Activated T-helper 1 cell treated with anti-CD3 and anti-CD28 coated beads, Interleukin-12 subunit alpha, Interleukin-12 subunit beta, Interleukin-2, Interleukin-4 antibody, amounts not matched to agents 30 ng/mL and 10 ng/mL and 1 ng/mL, durations not matched to agents 14 hours and 24 hours and 36 hours (primary cell): ENCODE measurements at regions of chr1 and their contacts with region 1.

Region 1: GRCh38 chr1:66350001-66350547 is 183.9 kb upstream of the SGIP1 start:
- DNase-seq: no peak
- H3K4me3 Mint-ChIP-seq: peak overlapping the region; percentile 75
- H3K27ac Mint-ChIP-seq: peak overlapping the region; percentile 81
- H3K4me1 Mint-ChIP-seq: peaks cover 90% of the 10 kb centered on the region
- H3K27me3 Mint-ChIP-seq: no peaks in the 10 kb centered on the region

Region 2: DNA sequence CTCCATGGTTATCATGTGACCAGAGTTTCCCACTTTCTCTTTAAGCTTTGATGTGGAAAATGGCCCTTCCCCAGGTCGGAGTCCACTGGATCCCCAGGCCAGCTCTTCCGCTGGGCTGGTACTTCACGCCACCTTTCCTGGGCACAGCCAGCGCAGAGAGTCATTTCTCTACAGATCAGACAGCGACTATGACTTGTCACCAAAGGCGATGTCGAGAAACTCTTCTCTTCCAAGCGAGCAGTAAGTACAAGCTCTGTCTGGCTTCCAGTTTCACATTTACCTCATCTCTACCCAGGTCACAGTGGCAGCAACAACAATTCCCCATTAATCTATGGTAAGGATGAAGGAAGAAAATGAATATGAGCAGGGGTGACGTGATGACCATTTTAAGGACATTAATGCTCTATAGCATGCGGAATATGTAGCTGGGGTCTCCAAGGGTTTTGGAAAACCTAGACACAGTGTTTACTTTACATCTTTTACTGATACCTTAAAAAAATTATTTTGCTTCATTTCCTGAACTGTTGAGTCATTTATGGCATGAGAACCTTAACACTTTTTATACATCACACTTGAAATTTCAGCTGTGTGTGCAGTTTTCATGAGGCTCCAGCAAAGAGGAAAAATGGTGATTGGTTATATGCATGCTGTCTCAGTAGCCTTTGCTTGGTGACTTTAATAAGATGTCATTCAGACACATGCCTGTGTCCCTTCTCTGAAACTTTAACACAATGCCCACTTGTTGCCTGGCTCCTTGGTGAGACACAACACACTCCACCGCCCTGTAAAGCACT is 102.5 kb before region 1 on chr1:
- intact Hi-C with region 1: no loop called
- DNase-seq: peak; percentile 43
- H3K4me3 Mint-ChIP-seq: peak overlapping the region; percentile 72
- H3K27ac Mint-ChIP-seq: peak overlapping the region; percentile 71
- H3K4me1 Mint-ChIP-seq: peaks cover 58% of the 10 kb centered on the region
- H3K27me3 Mint-ChIP-seq: no peaks in the 10 kb centered on the region

Region 3: DNA sequence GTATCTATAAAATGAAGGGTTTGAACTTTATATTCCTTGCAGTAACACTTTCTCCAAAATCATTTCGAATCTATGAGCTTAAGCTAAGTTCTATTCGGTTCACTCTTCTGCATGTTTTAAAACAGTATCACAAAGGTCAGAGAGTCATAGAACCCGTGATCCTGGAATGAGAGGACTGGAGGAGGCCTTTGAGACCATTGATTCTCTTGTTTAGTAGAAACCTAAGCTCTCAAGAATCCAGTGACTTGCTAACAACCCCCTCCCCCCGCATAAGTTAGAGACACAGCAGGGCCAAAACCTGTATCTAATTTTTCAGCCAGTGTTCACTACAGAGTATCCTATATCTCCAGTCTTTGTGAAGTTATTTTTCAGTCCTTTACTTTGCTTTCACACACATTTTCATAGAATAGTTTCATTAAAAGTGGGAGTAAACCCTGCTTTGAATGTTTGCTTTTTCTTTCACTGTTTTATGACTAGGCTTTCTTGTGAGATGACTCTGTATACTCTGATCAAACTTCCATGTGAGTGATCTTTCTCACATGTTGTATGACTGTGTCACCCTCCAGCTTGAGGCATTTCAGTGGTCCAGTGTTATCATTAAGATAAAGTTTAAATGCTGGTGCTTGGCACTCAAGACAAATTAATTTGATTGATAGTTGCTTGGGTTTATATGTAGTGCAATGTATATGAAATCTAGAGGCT is 91.5 kb before region 1 on chr1:
- intact Hi-C with region 1: loop called (anchors 1 kb)
- DNase-seq: no peak
- H3K4me3 Mint-ChIP-seq: no peak overlapping the region
- H3K27ac Mint-ChIP-seq: peak overlapping the region; percentile 53
- H3K4me1 Mint-ChIP-seq: peaks cover 83% of the 10 kb centered on the region
- H3K27me3 Mint-ChIP-seq: peaks cover 2% of the 10 kb centered on the region

Region 4: GRCh38 chr1:66300972-66301451 is 49.1 kb before region 1 on chr1:
- intact Hi-C with region 1: loop called (anchors 1 kb)
- DNase-seq: peak; percentile 48
- H3K4me3 Mint-ChIP-seq: peak overlapping the region; percentile 80
- H3K27ac Mint-ChIP-seq: peak overlapping the region; percentile 94
- H3K4me1 Mint-ChIP-seq: peaks cover 47% of the 10 kb centered on the region
- H3K27me3 Mint-ChIP-seq: no peaks in the 10 kb centered on the region

Region 5: DNA sequence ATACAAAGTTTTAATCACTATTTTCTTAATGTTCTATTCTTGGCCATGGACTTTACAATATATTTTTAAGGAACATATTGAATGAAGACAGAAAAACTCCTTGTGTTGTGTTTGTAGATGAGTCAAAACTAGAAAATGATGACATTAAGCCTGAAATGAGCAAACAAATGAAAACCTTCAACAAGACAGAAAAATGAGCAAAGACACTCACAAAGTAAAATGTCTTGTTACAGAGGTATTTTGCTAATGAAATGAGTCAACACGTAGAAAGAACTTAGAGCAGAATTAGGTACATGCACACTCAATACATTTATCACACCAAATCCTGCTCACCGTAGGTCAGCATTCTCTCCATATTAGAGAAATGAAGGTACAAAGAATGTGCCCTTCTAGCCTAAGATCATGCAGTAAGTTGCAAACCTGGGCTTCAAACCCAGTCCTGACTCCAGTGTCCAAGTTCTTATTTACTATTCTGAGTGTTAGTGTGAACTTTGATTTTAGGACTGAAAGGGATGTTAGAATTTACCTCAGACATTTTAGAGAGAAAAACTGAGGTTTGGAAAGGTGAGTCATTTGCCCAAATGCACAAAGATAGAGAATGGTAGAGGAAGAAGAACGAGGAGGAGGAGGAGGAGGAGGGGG is 49.9 kb after region 1 on chr1:
- intact Hi-C with region 1: loop called (anchors 1 kb)
- DNase-seq: no peak
- H3K4me3 Mint-ChIP-seq: peak overlapping the region; percentile 67
- H3K27ac Mint-ChIP-seq: peak overlapping the region; percentile 88
- H3K4me1 Mint-ChIP-seq: peaks cover 47% of the 10 kb centered on the region
- H3K27me3 Mint-ChIP-seq: no peaks in the 10 kb centered on the region

Region 6: DNA sequence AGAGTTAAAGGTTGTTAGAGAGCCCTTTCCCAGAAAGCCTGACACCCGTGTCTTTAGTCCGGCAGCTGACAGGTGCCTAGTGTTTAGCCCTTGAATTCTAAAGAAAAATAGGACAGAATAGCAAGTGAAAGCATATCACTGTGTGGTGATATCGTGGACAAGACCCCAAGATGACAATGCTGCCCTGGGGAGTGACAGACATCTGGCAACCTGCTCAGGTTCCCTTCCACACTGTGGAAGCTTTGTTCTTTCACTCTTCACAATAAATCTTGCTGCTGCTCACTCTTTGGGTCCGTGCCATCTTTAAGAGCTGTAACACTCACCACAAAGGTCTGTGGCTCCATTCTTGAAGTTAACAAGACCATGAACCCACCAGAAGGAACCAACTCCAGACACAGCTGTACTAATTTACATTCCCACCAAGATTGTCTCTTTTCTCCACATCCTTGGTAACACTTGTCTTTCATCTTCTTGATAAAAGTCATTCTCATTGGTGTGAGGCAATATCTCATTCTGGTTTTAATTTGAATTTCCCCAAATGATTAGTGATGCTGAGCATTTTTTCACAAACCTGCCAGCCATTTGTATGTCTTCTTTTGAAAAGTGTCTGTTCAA is 76.3 kb after region 1 on chr1:
- intact Hi-C with region 1: no loop called
- DNase-seq: no peak
- H3K4me3 Mint-ChIP-seq: no peak overlapping the region
- H3K27ac Mint-ChIP-seq: no peak overlapping the region
- H3K4me1 Mint-ChIP-seq: no peaks in the 10 kb centered on the region
- H3K27me3 Mint-ChIP-seq: peaks cover 1% of the 10 kb centered on the region

Region 7: DNA sequence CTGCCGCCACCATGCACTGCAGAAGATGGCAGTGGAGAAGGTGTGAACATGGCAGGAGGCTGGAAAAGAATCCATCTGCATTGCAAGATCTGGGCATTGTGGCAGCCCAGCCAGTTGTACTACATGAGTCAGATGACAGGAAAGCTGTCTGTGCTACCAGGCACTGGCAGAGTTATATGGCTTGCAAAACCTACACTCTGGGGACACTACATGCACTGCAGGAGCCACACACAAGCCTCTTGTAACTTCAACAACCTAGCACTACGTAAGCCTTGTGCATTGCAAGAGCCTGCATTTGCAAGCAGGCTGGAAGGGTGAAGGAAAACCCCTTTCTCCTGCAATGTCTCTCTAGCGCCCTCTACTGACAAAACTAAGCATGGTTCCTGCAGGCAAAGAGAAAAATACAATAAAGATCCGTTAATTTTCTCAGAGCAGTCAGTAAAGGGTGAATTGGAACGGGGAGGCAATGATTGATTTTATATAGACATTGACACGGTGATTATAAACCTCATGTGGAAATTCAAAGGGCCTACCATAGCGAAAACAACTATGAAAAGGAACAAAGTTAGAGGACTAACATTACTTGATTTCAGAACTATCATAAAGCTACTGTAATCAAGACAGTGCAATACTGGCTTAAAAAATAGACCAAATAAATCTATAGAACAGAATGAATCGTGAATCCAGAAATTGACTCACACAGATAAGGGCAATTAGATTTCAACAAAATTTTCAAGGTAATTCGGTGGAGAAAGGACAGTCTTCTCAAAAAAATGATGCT is 376.0 kb after region 1 on chr1:
- intact Hi-C with region 1: loop called (anchors 1 kb)
- DNase-seq: peak; percentile 54
- H3K4me3 Mint-ChIP-seq: no peak overlapping the region
- H3K27ac Mint-ChIP-seq: no peak overlapping the region
- H3K4me1 Mint-ChIP-seq: peaks cover 19% of the 10 kb centered on the region
- H3K27me3 Mint-ChIP-seq: peaks cover 12% of the 10 kb centered on the region

Region 8: DNA sequence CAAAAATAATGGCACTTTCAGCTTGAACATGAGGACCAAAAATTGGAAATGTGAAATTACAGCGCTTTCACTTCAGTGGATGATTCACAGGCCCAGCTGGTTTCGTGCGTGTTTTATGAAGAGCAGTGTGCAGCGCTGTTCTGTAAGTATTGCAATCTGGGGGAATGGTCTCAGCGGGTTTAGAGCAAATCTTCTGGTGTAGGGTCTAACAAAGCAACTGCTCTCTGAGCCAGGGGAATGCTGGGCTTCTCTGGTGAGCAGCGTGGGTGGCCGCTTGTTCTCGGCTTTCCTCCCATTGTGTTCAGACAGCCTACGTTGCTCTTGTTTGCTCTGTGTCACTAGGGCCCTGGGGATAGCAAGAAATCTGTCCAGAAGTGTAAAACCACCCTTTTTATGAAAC is 1292.6 kb after region 1 on chr1:
- intact Hi-C with region 1: no loop called
- DNase-seq: no peak
- H3K4me3 Mint-ChIP-seq: no peak overlapping the region
- H3K27ac Mint-ChIP-seq: no peak overlapping the region
- H3K4me1 Mint-ChIP-seq: no peaks in the 10 kb centered on the region
- H3K27me3 Mint-ChIP-seq: peaks cover 8% of the 10 kb centered on the region